Gastrocnemius medialis (tissue), 4 donors: ENCODE measurements at regions of chr2 and their contacts with region 1.

Region 1: GRCh38 chr2:39696838-39697237 is 31.1 kb downstream of the TMEM178A start:
- DNase-seq: no peak
- ATAC-seq: peak in 1 of 2 donors; percentile 36
- H3K4me3 ChIP-seq: no peak overlapping the region
- H3K27ac ChIP-seq: peak overlapping the region; percentile 38 to 61 (median 48)
- H3K4me1 ChIP-seq: peaks cover 24 to 29% of the 10 kb centered on the region in 2 donors
- H3K27me3 ChIP-seq: no peaks in the 10 kb centered on the region
- CTCF ChIP-seq: peak; percentile 19 to 36 (median 31)
- POLR2A ChIP-seq: no peak

Region 2: GRCh38 chr2:39642051-39642742 is 54.6 kb before region 1 on chr2:
- in situ Hi-C with region 1: no loop called
- intact Hi-C with region 1: loop called (anchors 5 kb)
- DNase-seq: no peak
- ATAC-seq: no peak
- H3K4me3 ChIP-seq: no peak overlapping the region
- H3K27ac ChIP-seq: no peak overlapping the region
- H3K4me1 ChIP-seq: peaks cover 15 to 18% of the 10 kb centered on the region in 2 donors
- H3K27me3 ChIP-seq: no peaks in the 10 kb centered on the region
- CTCF ChIP-seq: no peak
- POLR2A ChIP-seq: no peak

Region 3: GRCh38 chr2:39948016-39948719 is 251.3 kb after region 1 on chr2:
- in situ Hi-C with region 1: no loop called
- intact Hi-C with region 1: no loop called
- DNase-seq: no peak
- ATAC-seq: no peak
- H3K4me3 ChIP-seq: no peak overlapping the region
- H3K27ac ChIP-seq: no peak overlapping the region
- H3K4me1 ChIP-seq: no peaks in the 10 kb centered on the region
- H3K27me3 ChIP-seq: no peaks in the 10 kb centered on the region
- CTCF ChIP-seq: no peak
- POLR2A ChIP-seq: no peak

Region 4: GRCh38 chr2:40168041-40168442 is 471.2 kb after region 1 on chr2:
- in situ Hi-C with region 1: no loop called
- intact Hi-C with region 1: no loop called
- DNase-seq: no peak
- ATAC-seq: no peak
- H3K4me3 ChIP-seq: no peak overlapping the region
- H3K27ac ChIP-seq: no peak overlapping the region
- H3K4me1 ChIP-seq: no peaks in the 10 kb centered on the region
- H3K27me3 ChIP-seq: no peaks in the 10 kb centered on the region
- CTCF ChIP-seq: no peak
- POLR2A ChIP-seq: no peak